PC-9 (cell line): ENCODE measurements at regions of chr1 and their contacts with region 1.

Region 1: DNA sequence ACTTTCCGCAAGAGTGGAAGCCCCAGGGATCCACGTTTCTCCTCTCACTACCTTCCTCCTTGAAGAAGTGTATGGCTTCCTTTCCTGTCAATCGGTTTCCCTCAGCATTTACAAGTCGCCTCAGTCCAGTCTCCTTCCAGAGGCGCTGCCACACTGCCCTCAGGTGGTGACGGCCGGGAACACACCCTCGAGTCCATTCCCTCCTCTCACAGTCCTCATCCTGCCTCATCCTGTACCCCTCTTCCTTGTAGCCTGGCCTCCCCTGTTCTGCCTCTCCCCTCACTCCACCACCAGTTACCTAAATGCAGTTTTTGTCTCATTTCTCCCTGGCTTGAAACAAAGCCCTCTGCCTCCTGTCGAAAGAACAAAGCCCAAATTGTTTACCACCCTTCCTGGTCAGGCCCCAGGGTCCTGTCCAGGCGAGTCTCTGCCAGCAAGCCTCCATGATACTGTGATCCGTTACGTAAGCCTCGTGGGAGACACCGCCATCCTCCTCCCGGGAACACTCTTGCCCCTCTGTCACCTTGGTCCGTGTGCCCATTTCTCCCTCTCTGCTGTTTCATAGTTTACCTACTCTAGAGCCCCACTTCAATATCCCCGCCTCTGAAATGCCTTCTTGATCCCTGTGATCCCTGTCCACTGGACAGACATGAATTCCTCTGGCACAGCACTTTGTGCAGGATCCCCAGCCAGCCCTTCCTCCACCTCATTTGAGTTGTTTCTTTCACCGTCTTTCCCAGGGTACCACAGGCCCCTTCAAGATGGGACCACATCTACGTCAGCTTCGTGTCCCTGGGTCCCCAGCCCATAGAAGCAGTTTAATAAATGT is 23.3 kb upstream of the LSM10 start:
- DNase-seq: peak; percentile 72 to 93
- H3K4me3 ChIP-seq: no peak overlapping the region
- H3K27ac ChIP-seq: no peak overlapping the region
- H3K4me1 ChIP-seq: peaks cover 23% of the 10 kb centered on the region
- H3K27me3 ChIP-seq: no peaks in the 10 kb centered on the region
- CTCF ChIP-seq: peak; percentile 91

Region 2: DNA sequence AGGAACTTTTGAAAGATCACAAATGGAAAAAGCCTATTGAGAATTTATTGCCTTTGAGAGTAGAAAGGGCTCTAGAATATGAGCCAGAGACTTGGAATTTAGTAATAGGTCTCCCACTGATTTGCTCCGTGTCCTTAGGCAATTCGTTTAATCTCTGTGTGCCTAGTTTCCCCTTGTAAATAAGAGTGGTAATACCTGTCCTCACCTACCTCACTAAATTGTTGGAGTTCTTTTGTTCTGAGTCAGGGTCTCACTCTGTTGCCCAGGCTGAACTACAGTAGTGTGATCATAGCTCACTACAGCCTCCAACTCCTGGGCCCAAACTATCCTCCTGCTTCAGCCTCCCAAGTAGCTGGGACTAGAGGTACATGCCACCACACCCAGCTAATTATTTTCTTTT is 352.2 kb before region 1 on chr1:
- CTCF ChIA-PET with region 1: interaction called, 12 read pairs
- POLR2A ChIA-PET with region 1: no interaction called
- intact Hi-C with region 1: no loop called
- DNase-seq: peak in 1 of 2 experiments; percentile 78
- H3K4me3 ChIP-seq: no peak overlapping the region
- H3K27ac ChIP-seq: peak overlapping the region; percentile 8; the same call in 1 of the 2 replicates
- H3K4me1 ChIP-seq: peaks cover 9% of the 10 kb centered on the region; the same call in 1 of the 2 replicates
- H3K27me3 ChIP-seq: no peaks in the 10 kb centered on the region
- CTCF ChIP-seq: no peak

Region 3: GRCh38 chr1:36279110-36279788 is 141.8 kb before region 1 on chr1:
- CTCF ChIA-PET with region 1: no interaction called
- POLR2A ChIA-PET with region 1: no interaction called
- intact Hi-C with region 1: no loop called
- DNase-seq: no peak
- H3K4me3 ChIP-seq: no peak overlapping the region
- H3K27ac ChIP-seq: peak overlapping the region; percentile 31; the same call in 1 of the 2 replicates
- H3K4me1 ChIP-seq: no peaks in the 10 kb centered on the region
- H3K27me3 ChIP-seq: no peaks in the 10 kb centered on the region
- CTCF ChIP-seq: no peak

Region 4: GRCh38 chr1:36300526-36300925 is 120.5 kb before region 1 on chr1:
- CTCF ChIA-PET with region 1: interaction called, 3 read pairs
- POLR2A ChIA-PET with region 1: interaction called, 3 read pairs
- intact Hi-C with region 1: loop called (anchors 2 kb)
- DNase-seq: peak in 1 of 2 experiments; percentile 60
- H3K4me3 ChIP-seq: no peak overlapping the region
- H3K27ac ChIP-seq: peak overlapping the region; percentile 89
- H3K4me1 ChIP-seq: peaks cover 32% of the 10 kb centered on the region
- H3K27me3 ChIP-seq: no peaks in the 10 kb centered on the region
- CTCF ChIP-seq: no peak

Region 5: DNA sequence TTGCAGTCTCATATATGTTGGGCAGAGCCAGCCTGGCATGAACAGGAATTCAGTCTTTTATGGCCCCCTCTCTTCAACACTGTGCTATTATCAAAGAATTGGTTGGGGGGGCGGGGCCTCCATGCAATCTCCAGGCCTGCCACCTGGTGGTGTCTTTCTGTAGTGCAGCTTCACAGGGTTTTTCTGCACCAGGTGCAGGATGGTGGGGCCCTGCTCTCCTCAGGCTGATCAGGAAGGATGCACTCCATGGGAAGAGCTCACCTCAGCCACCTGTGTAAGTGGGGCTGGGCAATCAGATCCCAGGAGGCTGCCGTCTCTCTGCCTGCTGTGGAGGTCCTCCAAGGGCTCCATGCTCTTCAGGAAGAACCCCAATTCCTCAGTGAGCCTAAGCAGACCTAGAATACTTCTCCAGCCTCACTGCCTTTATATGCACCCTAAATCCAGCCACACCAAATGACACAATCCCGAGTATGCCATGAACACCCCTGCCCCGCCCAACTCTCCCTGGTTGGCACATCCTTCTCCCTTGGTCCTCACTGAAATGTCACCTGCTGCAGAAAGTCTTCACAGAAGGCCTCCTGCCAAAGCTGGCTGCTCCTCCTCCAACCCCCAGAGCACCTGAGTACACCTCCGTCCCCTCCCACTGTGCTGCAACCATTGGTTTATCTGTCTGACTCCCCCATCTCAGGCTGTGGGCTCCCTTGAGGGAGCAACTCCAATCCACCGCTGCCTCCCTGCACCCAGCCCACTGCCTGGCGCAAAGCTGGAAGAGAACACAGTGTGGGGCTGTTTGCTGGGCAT is 51.8 kb before region 1 on chr1:
- CTCF ChIA-PET with region 1: interaction called, 9 read pairs
- POLR2A ChIA-PET with region 1: no interaction called
- intact Hi-C with region 1: loop called (anchors 1 kb)
- DNase-seq: peak; percentile 51 to 84
- H3K4me3 ChIP-seq: no peak overlapping the region
- H3K27ac ChIP-seq: peak overlapping the region; percentile 13; the same call in 1 of the 2 replicates
- H3K4me1 ChIP-seq: peaks cover 36% of the 10 kb centered on the region
- H3K27me3 ChIP-seq: no peaks in the 10 kb centered on the region
- CTCF ChIP-seq: peak; percentile 95